Calu3 (cell line): ENCODE measurements at regions of chr14 and their contacts with region 1.

Region 1: DNA sequence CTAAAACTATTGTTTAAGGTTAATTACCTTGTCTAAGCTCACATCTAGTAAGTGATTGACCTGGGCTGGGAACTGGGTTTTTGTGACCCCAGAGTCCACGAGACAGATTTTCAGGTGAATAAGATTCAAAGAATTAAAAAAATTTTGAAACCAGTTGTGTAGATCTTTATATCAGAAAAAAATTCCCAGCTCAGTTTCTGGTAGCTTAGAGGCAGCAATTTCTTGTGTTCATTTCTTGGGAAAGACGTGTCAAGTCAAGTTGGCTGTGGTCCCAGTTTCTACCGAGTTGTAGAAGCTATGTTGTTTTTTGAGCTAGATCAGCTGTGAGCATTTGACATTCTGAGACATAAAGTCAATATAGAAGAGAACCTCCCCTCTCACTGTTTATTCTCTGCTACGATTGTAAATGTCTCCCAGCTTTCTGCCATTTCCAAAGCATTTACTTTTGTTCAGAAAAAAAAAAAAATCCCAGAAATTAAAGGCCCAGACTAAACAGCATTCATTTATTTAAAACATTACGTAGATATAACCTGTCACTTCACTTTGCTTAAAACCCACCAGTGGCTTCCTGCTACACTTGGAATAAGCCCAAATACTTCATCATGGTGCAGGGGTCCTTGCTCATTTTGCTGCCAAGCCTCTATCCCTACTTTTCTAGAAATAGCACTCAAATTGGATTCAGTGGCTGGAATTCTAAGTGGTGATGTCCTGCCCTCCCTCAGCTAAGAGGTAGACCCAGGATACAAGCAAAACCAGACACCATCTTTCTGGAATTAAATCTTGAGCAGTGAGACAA is 20.5 kb upstream of the PYGL start:
- DNase-seq: peak; percentile 64
- H3K4me3 Mint-ChIP-seq: no peak overlapping the region
- H3K27ac Mint-ChIP-seq: no peak overlapping the region
- H3K4me1 Mint-ChIP-seq: peaks cover 43% of the 10 kb centered on the region
- H3K27me3 Mint-ChIP-seq: no peaks in the 10 kb centered on the region
- CTCF ChIP-seq: no peak

Region 2: GRCh38 chr14:50554431-50554996 is 410.3 kb before region 1 on chr14:
- CTCF ChIA-PET with region 1: no interaction called
- intact Hi-C with region 1: no loop called
- DNase-seq: no peak
- H3K4me3 Mint-ChIP-seq: no peak overlapping the region
- H3K27ac Mint-ChIP-seq: no peak overlapping the region
- H3K4me1 Mint-ChIP-seq: no peaks in the 10 kb centered on the region
- H3K27me3 Mint-ChIP-seq: peaks cover 39% of the 10 kb centered on the region
- CTCF ChIP-seq: no peak

Region 3: GRCh38 chr14:50773632-50774541 is 190.9 kb before region 1 on chr14:
- CTCF ChIA-PET with region 1: no interaction called
- intact Hi-C with region 1: no loop called
- DNase-seq: peak; percentile 56
- H3K4me3 Mint-ChIP-seq: no peak overlapping the region
- H3K27ac Mint-ChIP-seq: no peak overlapping the region
- H3K4me1 Mint-ChIP-seq: no peaks in the 10 kb centered on the region
- H3K27me3 Mint-ChIP-seq: no peaks in the 10 kb centered on the region
- CTCF ChIP-seq: peak; percentile 68

Region 4: GRCh38 chr14:51018521-51018920 is 53.7 kb after region 1 on chr14:
- CTCF ChIA-PET with region 1: no interaction called
- intact Hi-C with region 1: no loop called
- DNase-seq: no peak
- H3K4me3 Mint-ChIP-seq: no peak overlapping the region
- H3K27ac Mint-ChIP-seq: no peak overlapping the region
- H3K4me1 Mint-ChIP-seq: no peaks in the 10 kb centered on the region
- H3K27me3 Mint-ChIP-seq: no peaks in the 10 kb centered on the region
- CTCF ChIP-seq: no peak

Region 5: DNA sequence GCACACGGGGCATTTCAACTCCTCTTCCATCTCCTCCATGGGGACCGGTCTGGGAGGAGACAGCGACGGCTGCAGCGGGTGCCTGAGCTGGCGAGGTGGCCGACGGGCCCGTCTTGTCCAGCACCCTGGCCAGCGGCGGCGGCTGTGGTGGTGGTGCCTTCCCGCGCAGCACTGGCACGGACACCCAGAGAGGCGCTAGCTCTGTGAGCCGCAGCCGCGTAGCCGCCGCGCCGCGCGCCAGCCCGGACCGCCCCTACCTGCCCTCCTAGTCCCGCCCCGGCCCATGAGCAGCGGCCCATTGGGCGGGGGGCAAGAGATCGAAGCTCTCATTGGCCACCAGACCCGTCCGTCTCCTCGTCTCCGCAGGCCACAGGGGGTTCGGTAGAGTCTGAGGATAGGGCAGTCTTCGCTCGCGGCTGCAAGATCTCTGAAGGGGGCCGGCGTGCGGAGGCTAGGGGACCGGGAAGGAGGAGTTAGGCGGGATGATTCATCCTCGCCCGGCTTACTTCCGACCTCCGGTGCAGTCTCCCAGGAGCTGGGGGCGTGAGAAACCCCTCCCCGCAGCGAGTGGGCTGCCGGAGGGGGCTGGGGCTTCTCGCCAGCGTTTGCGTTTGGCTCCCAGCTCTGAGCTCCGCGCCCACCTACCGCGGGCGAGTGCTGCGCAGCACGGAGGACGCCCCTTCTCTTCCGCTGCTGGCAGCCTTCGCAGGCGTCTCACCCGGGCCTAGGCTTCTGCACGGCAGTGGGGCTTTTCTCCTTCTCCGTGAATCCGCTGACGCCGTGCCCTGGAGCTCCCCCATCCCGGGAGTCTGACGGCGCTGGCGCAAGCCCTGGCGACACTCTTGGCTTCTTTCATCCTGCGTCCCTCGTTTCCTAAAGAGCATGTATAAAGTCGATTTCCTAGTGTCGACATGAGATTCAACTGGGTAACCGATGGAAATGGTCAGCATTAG is 130.4 kb after region 1 on chr14 and contains the start of gene TRIM9:
- CTCF ChIA-PET with region 1: interaction called, 8 read pairs
- intact Hi-C with region 1: loop called (anchors 2 kb)
- DNase-seq: peak; percentile 97
- H3K4me3 Mint-ChIP-seq: peak within 1 kb of the TSS; percentile 84
- H3K27ac Mint-ChIP-seq: peak within 1 kb of the TSS; percentile 84
- H3K4me1 Mint-ChIP-seq: peaks cover 9% of the 10 kb centered on the region
- H3K27me3 Mint-ChIP-seq: no peaks in the 10 kb centered on the region
- CTCF ChIP-seq: no peak
- total RNA-seq, gene TRIM9: 1.6 TPM in 2 replicates

Region 6: GRCh38 chr14:51651388-51652167 is 686.8 kb after region 1 on chr14 and contains the start of gene FRMD6:
- CTCF ChIA-PET with region 1: no interaction called
- intact Hi-C with region 1: loop called (anchors 5 kb)
- DNase-seq: peak; percentile 84
- H3K4me3 Mint-ChIP-seq: peak within 1 kb of the TSS; percentile 80
- H3K27ac Mint-ChIP-seq: peak within 1 kb of the TSS; percentile 58
- H3K4me1 Mint-ChIP-seq: peaks cover 17% of the 10 kb centered on the region
- H3K27me3 Mint-ChIP-seq: no peaks in the 10 kb centered on the region
- CTCF ChIP-seq: peak; percentile 55
- total RNA-seq, gene FRMD6: 17.0 and 33.3 TPM in 2 replicates